Motor neuron (in vitro differentiated cells): ENCODE measurements at regions of chr13 and their contacts with region 1.

Region 1: GRCh38 chr13:53759021-53759420 is 730.4 kb downstream of the OLFM4 start:
- ATAC-seq: peak in 1 of 8 experiments; percentile 51
- H3K4me3 ChIP-seq: no peak overlapping the region
- H3K27ac ChIP-seq: no peak overlapping the region
- H3K4me1 ChIP-seq: no peaks in the 10 kb centered on the region

Region 2: DNA sequence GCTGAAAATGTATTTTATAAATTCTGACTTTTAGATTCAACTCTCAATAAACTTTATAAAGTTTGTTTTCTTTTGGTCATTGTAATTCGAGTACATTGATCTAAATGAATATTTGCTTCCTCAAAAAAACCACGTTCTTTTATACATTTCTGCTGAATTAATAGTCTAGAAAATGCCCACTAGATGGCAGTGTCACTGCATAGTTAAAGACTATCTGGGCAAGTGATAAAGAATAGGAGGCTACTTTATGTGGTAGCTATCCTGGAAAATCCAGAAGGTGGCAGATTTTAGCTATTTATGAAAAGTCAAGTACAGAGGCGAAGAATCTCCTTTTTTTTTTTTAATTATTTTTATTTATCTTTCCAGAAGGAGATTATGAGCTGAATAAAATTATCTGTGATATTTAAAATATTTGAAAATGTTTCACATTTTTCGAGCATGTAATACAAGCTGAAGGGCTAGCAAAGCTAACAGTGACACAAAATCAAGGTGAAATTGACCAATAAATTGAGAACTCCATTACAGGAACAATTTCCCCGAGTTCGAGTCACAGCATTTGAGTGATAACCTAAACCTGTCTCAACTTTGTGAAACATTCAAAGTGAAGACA is 508.6 kb before region 1 on chr13:
- in situ Hi-C with region 1: loop called in 1 of 9 experiments (anchors 25 kb)
- ATAC-seq: peak; percentile 81 to 95 (median 84)
- H3K4me3 ChIP-seq: no peak overlapping the region
- H3K27ac ChIP-seq: no peak overlapping the region
- H3K4me1 ChIP-seq: peaks cover 0 to 2% of the 10 kb centered on the region in 2 donors

Region 3: DNA sequence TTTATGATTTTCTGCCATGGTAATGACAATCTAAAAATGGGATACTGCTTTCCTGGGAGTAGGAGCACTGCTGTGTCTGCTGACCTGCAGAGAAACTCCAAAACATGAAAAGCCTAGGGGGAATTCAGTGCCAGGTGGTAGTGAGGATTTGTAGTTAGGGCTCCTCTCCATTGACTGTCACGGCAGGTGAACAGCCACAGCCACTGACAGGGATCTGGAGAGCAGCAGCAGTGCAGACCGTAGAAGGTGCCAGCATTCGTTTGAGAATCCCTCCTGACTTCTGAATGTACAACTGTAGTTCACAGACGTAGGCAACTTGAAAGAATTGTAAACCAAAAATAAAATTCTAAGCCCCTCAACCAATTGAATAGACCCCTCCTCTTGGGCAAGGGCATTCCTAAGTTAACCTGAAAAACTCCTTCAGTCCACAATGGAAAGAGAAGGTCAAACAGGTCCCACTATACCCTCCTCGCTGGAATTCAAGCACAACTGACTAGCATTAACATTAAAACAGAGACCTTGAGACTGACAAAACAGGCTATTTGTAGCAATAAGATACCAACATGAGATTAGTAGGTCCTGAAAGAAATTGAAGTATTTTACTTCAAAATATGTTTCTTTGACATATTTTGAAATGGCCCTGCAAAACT is 598.4 kb after region 1 on chr13:
- in situ Hi-C with region 1: no loop called
- ATAC-seq: no peak
- H3K4me3 ChIP-seq: no peak overlapping the region
- H3K27ac ChIP-seq: no peak overlapping the region
- H3K4me1 ChIP-seq: no peaks in the 10 kb centered on the region